ENCODE measurements at regions of chr11 and their contacts with region 1.

Region 1: GRCh38 chr11:36354221-36355003 is 58.3 kb downstream of the PRR5L start:
- DNase-seq: peak; percentile 42
- ATAC-seq: peak; percentile 78
- H3K4me3 ChIP-seq: peak overlapping the region; percentile 18; the same call in 1 of the 2 replicates
- H3K27ac ChIP-seq: 0 out of 2 replicates have a peak overlapping the region, but pooled peaks have one; percentile 1
- H3K4me1 ChIP-seq: peaks cover 44% of the 10 kb centered on the region
- H3K27me3 ChIP-seq: no peaks in the 10 kb centered on the region
- CTCF ChIP-seq: no peak
- EP300 ChIP-seq: peak; percentile 27 to 58; a peak in 3 of 4 replicates
- POLR2A ChIP-seq: no peak
- RAD21 ChIP-seq: no peak

Region 2: GRCh38 chr11:36312611-36313472 is 41.6 kb before region 1 on chr11:
- CTCF ChIA-PET with region 1: no interaction called
- POLR2A ChIA-PET with region 1: no interaction called
- RAD21 ChIA-PET with region 1: interaction called, 3 read pairs
- SMC1A ChIA-PET with region 1: interaction called, 4 read pairs
- in situ Hi-C with region 1: no loop called
- intact Hi-C with region 1: loop called (anchors 2 kb)
- DNase-seq: no peak
- ATAC-seq: peak; percentile 64
- H3K4me3 ChIP-seq: no peak overlapping the region
- H3K27ac ChIP-seq: no peak overlapping the region
- H3K4me1 ChIP-seq: no peaks in the 10 kb centered on the region
- H3K27me3 ChIP-seq: peaks cover 0 to 2% of the 10 kb centered on the region in 2 experiments; a peak in 1 of 4 replicates
- CTCF ChIP-seq: no peak
- EP300 ChIP-seq: peak in 1 of 2 experiments; percentile 65; a peak in 2 of 4 replicates
- POLR2A ChIP-seq: no peak
- RAD21 ChIP-seq: no peak

Region 3: DNA sequence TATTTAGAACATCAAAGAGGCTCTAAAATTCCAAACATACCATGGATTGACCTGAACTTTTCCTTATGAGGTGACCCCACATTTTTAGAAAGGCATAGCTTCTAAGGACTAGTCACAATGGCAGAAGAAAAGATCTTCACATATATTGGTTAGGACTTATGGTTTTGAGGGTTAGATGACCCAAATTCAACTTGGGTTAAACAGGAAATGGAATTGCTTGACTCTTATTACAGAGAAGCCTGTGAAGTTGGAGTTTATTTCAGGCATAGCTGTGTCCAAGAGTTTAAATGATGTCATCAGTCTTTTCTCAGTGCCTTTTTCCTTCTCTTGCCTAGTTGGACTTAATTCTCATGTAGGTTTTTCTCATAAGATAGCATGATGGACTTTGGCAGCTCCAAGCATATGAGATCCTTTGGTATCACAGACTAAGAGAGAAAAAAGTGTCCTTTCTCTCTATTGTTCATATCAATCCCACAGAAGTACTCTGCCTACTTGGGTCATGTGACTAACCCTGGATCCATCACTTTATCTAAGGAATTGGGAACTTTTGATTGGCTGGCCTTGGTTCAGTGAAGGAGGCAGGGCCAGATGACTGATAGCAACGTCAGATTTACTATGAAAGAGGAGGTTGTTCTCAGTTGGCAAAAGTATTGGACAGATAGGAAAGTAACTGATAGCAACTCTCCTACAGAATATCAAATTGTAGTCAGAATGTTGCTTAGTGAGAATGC is 196.1 kb after region 1 on chr11:
- CTCF ChIA-PET with region 1: no interaction called
- POLR2A ChIA-PET with region 1: no interaction called
- RAD21 ChIA-PET with region 1: no interaction called
- SMC1A ChIA-PET with region 1: no interaction called
- in situ Hi-C with region 1: no loop called
- intact Hi-C with region 1: no loop called
- DNase-seq: no peak
- ATAC-seq: no peak
- H3K4me3 ChIP-seq: no peak overlapping the region
- H3K27ac ChIP-seq: no peak overlapping the region
- H3K4me1 ChIP-seq: no peaks in the 10 kb centered on the region
- H3K27me3 ChIP-seq: no peaks in the 10 kb centered on the region
- CTCF ChIP-seq: no peak
- EP300 ChIP-seq: no peak
- POLR2A ChIP-seq: no peak
- RAD21 ChIP-seq: no peak

Measured in GM12878 (cell line).